ENCODE measurements at regions of chr3 and their contacts with region 1.

Region 1: DNA sequence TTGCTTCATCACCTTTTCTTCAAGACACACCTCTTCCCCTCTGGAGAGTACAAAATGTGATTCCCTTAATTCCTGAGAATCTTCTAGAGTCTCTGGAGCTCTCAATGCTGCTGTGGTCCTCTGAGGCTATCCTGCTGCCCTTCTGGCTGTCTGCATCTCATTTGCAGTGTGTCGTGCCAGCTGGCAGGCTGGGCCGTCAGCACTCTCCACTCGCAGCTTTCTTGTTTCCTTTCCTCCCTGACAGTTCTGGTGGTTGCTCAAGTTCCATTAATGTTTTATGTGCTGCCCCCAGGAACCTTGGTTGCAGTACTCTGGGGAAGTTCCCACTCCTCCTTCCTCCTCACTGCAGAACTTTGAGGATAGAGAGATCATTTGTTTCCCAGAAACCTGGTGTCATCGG is 210.8 kb upstream of the ROPN1 start:
- DNase-seq: peak; percentile 77

Region 2: DNA sequence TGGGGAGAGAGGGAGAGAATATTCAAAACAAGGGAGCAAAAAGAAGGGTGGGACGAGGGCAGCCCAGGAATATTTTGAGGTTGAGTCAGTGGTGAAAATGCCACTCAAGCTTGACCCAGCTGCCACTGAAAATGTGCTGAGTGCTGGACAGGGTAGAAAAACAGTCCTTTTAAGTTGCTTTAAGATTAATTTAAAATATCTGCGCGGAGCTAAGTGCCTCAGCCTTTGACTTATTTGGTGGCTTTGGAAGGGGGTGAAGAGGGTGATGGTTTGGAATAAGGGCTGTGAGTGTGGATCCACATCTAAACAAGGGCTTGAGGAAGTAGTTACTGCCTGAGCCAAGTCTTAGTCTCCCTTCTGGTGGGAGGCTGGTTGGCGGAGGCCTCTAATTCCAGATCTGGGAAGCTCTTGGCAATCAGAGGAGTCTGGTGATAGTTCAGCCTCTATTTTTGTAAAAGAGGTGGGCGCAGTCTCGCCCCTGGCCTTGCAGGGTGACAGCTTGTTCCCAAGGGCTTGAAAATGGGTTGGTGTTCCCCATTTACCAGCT is 69.9 kb after region 1 on chr3:
- intact Hi-C with region 1: loop called (anchors 5 kb)
- DNase-seq: no peak

Measured in cardiac septum (tissue), 1 donor.